ENCODE measurements at regions of chr1 and their contacts with region 1.

Region 1: DNA sequence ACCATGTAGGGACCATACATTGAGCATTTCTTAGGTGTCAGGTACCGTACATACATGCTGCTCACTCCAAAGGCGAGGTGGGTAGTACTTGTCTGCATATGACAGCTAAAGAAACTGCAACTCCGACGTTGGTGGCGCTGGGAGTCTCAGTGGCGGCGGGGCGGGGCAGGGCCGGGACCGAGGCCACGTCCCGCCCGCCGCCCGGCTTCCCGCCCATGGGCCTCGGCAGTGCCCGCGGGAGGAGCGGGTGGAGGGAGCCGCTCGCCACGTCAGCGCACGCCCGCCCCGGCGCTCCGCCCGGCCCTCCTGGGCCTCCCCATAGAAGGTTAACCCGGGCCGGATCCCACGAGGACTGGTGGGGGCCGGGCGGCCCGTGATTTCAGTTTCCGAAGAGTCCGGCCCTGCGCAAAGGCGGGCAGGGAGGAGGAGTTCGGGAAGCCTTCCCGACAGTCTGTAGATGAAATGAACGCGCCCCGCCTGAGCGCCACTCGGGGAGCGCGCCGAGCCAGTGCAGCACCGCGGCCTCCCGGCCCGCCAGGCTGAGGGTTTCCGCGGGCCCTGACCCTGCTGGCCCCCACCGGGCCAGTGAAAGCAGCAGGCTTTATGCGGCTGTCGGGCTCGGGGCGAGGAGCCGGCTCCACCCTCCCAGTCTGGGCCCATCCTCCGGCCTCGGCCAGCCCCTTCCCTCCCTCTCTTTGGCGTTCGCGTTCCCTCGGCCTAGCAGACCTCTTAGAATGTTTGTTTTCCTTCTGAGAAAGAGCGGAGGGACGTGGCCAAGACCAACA is 119.9 kb upstream of the JUN start:
- DNase-seq: peak; percentile 90
- H3K4me3 Mint-ChIP-seq: peak overlapping the region; percentile 71
- H3K27ac Mint-ChIP-seq: peak overlapping the region; percentile 43
- H3K4me1 Mint-ChIP-seq: peaks cover 8% of the 10 kb centered on the region
- H3K27me3 Mint-ChIP-seq: no peaks in the 10 kb centered on the region

Region 2: DNA sequence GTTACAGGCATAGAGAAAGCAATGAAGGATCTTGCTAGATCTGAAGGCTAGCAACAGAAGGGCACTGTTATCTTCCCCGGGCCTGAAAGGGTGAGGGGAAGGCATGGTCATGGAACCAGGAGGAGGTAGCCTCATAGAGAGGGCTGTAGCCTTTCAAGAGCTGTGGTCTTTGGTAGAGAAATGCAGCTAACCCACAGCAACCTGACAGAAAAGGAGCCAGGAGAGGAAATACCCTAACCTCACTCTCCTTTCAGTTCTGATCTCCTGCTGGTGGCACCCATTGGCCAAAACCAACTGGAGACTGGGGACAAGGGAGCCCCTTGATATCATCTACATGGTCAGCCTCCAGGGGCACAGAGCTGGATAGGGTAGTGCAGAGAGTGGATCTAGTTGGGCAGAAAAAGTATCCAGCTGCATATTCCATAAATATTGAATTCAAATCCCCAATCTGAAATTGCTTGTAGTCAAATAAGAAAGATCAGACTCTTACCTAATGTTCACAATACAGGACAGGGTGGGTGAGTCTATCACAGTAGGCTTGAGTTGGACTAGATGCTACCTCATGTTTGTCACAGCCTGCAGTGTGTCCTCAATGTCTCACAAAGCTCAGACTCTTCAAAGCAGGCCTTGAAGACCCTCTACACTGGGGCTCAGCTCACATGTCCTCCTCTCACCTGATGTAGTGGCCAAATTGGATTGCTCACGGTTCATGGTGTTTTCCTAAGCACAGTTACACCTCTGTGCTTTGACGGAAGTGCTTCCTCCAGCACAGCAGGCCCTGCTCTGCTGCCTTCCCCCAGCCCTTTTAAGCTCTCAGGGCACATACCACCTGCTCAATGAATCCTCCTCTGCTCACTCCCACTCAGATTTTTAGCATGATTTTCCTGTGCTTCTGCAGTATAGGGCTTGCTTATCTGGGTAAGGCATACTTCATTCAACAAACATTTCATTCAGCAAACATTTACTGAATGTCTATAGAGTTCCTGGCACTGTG is 45.7 kb before region 1 on chr1:
- CTCF ChIA-PET with region 1: no interaction called
- intact Hi-C with region 1: loop called (anchors 1 kb)
- DNase-seq: peak; percentile 60
- H3K4me3 Mint-ChIP-seq: no peak overlapping the region
- H3K27ac Mint-ChIP-seq: peak overlapping the region; percentile 82
- H3K4me1 Mint-ChIP-seq: peaks cover 44% of the 10 kb centered on the region
- H3K27me3 Mint-ChIP-seq: no peaks in the 10 kb centered on the region

Region 3: DNA sequence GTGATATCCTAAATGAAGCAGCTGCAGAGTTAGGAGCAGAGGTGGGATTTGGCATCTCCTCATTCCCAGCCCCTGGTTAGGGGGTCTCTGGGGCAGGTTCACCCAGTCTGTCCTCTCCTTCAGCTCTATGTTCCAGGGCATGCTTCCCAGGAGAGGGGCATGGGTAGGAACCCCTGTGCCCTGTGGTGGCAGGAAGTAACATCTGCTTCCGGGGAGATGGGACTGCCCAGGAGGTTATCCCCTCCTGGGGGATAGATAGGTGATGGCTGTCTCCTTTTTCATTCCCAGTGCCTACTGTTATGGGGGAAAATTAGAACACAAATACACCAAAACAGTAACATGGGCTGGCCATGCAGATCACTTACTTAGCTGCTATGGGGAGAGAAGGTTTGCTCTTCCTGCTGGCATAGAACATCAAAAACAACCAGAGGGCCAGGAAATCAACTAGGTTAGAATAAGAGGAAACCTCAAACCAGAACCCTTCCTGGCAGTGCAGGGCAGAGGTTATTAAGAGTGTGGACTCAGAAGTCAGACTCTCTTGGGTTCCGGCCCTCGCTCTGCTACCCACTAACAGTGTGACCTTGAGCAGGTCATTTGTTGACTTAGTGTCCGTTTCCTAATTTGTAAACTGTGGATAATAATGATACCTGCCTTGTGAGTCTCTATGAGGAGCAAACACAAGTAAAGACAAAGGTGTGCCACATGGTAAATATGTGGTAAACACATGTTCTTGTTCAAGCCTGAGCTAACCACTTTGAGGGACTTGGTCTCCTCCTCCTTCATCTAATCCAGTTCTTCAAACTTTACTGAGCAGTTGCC is 38.0 kb after region 1 on chr1:
- CTCF ChIA-PET with region 1: no interaction called
- intact Hi-C with region 1: loop called (anchors 1 kb)
- DNase-seq: peak; percentile 48
- H3K4me3 Mint-ChIP-seq: no peak overlapping the region
- H3K27ac Mint-ChIP-seq: peak overlapping the region; percentile 51
- H3K4me1 Mint-ChIP-seq: peaks cover 58% of the 10 kb centered on the region
- H3K27me3 Mint-ChIP-seq: no peaks in the 10 kb centered on the region

Region 4: GRCh38 chr1:59071289-59071688 is 167.6 kb after region 1 on chr1:
- CTCF ChIA-PET with region 1: no interaction called
- intact Hi-C with region 1: loop called (anchors 5 kb)
- DNase-seq: peak; percentile 19
- H3K4me3 Mint-ChIP-seq: peak overlapping the region; percentile 37
- H3K27ac Mint-ChIP-seq: peak overlapping the region; percentile 82
- H3K4me1 Mint-ChIP-seq: peaks cover 23% of the 10 kb centered on the region
- H3K27me3 Mint-ChIP-seq: no peaks in the 10 kb centered on the region

Region 5: GRCh38 chr1:59814180-59814900 is 910.6 kb after region 1 on chr1:
- CTCF ChIA-PET with region 1: no interaction called
- intact Hi-C with region 1: loop called (anchors 10 kb)
- DNase-seq: peak; percentile 93
- H3K4me3 Mint-ChIP-seq: no peak overlapping the region
- H3K27ac Mint-ChIP-seq: peak overlapping the region; percentile 78
- H3K4me1 Mint-ChIP-seq: peaks cover 3% of the 10 kb centered on the region
- H3K27me3 Mint-ChIP-seq: peaks cover 8% of the 10 kb centered on the region